ENCODE measurements at regions of chr9 and their contacts with region 1.

Region 1: DNA sequence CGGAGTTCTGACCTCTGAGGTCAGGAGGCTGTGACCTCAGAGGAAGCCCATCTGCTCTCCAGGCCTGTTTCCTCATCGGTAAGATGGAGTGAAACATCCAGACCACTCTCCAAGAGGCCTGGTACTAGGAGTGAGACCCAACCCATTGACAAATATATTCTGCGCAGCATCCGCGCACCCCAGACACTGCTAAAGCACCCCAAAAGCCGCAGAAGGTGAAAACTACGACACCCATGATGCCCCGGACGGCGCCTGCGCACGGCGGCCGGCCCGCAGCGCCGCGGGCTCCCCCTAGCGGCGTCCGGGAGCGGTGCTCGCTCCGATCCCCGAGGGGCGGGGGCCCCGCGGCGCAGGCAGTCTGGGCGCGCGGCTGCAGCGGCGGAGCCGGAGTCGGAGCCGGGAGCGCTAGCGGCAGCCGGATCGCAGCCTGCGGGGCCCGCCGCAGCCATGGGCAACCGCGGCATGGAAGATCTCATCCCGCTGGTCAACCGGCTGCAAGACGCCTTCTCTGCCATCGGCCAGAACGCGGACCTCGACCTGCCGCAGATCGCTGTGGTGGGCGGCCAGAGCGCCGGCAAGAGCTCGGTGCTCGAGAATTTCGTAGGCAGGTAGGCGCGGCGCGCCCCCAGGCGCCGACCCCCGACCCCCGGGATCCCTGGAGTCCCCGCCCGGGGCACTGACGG is at the start of gene DNM1:
- DNase-seq: peak; percentile 86
- total RNA-seq, gene DNM1: 7.3 TPM

Region 2: DNA sequence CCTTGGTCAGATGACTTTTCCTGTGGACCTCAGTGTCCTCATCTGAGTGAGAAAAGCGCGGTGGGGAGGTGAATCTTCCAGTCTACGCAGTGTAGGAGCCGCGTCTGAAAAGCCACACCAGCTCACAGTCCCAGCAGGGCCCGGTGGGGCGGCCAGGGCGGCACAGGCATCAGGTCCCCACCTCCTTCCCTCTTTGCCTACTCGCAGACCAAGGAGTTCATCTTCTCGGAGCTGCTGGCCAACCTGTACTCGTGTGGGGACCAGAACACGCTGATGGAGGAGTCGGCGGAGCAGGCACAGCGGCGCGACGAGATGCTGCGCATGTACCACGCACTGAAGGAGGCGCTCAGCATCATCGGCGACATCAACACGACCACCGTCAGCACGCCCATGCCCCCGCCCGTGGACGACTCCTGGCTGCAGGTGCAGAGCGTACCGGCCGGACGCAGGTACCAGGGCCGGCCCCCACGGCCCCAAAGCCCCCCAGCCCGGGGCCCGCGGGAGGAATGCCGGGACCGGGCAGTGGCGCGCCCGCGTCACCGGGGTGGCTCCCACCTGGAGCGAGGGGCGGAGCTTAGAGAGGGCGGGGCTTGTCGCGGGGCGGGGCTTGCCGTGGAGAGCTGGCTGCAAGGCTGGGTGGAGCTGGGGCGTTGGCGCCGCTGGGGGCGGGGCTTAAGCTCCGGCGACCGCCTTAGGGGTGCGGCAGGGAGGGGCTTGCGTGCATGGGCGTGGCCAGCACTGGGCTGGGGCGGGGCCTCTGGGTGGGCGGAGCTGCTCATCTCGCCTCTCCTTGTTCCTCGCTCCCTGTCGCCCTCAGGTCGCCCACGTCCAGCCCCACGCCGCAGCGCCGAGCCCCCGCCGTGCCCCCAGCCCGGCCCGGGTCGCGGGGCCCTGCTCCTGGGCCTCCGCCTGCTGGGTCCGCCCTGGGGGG is 47.0 kb after region 1 on chr9:
- intact Hi-C with region 1: loop called (anchors 5 kb)
- DNase-seq: peak; percentile 95

Measured in cardiac septum (tissue), 1 donor.